ENCODE measurements at regions of chr5 and their contacts with region 1.

Region 1: GRCh38 chr5:16160706-16161105 is 18.9 kb downstream of the MARCHF11 start:
- DNase-seq: no peak
- ATAC-seq: peak; percentile 60
- H3K4me3 Mint-ChIP-seq: no peak overlapping the region
- H3K27ac Mint-ChIP-seq: no peak overlapping the region
- H3K4me1 Mint-ChIP-seq: no peaks in the 10 kb centered on the region
- H3K27me3 Mint-ChIP-seq: no peaks in the 10 kb centered on the region

Region 2: DNA sequence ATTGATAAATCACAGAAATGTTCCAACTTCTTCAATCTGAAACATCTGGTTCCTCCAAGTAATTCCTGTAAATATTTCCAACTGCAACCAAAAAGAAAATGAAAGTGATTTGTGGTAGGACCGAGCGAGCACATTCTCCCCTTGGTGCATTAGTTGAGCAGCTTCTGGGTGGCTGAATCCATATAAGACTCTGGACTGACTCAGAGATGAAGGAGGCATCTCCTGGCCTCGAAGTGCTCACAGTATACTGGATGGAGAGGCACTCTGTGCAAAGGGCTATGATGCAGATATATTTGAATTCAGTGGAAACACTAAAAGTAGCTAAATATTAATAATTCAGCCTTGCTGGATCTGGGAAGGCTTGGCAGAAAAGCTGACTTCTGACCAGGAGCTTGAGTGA is 246.1 kb before region 1 on chr5:
- CTCF ChIA-PET with region 1: no interaction called
- DNase-seq: no peak
- ATAC-seq: no peak
- H3K4me3 Mint-ChIP-seq: no peak overlapping the region
- H3K27ac Mint-ChIP-seq: no peak overlapping the region
- H3K4me1 Mint-ChIP-seq: no peaks in the 10 kb centered on the region
- H3K27me3 Mint-ChIP-seq: no peaks in the 10 kb centered on the region

Region 3: DNA sequence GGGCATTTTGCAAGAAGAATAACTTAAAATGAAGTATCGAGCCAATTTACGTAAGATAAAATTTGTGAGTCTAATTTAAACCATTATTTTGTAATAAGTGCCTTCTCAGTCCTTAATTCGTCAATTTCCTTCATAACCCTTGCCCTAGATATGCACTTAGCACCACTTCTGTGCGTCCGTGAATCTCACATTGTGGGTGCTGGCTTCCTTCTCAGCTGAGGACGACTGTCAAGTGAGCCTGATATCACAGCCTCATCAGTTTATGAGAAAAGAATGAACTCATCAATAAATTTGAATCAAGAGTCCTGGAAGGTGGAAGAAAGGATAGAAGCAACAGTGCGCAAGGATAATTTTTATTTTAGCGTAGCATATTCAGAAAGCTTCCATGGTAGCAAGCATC is 45.6 kb before region 1 on chr5:
- CTCF ChIA-PET with region 1: no interaction called
- DNase-seq: no peak
- ATAC-seq: no peak
- H3K4me3 Mint-ChIP-seq: no peak overlapping the region
- H3K27ac Mint-ChIP-seq: no peak overlapping the region
- H3K4me1 Mint-ChIP-seq: no peaks in the 10 kb centered on the region
- H3K27me3 Mint-ChIP-seq: no peaks in the 10 kb centered on the region

Region 4: GRCh38 chr5:16147179-16147900 is 13.4 kb before region 1 on chr5:
- CTCF ChIA-PET with region 1: no interaction called
- DNase-seq: no peak
- ATAC-seq: no peak
- H3K4me3 Mint-ChIP-seq: no peak overlapping the region
- H3K27ac Mint-ChIP-seq: no peak overlapping the region
- H3K4me1 Mint-ChIP-seq: no peaks in the 10 kb centered on the region
- H3K27me3 Mint-ChIP-seq: no peaks in the 10 kb centered on the region

Region 5: GRCh38 chr5:16456103-16456832 is 295.6 kb after region 1 on chr5:
- CTCF ChIA-PET with region 1: interaction called, 23 read pairs
- DNase-seq: peak; percentile 50
- ATAC-seq: peak; percentile 79
- H3K4me3 Mint-ChIP-seq: no peak overlapping the region
- H3K27ac Mint-ChIP-seq: peak overlapping the region; percentile 72
- H3K4me1 Mint-ChIP-seq: peaks cover 49% of the 10 kb centered on the region
- H3K27me3 Mint-ChIP-seq: no peaks in the 10 kb centered on the region

Measured in activated CD8-positive, alpha-beta memory T cell treated with anti-CD3 and anti-CD28 coated beads, Interleukin-2, amount 10 ng/mL, durations not matched to agents 7 days and 5 days (primary cell).